Sigmoid colon (tissue), 7 donors: ENCODE measurements at regions of chr17 and their contacts with region 1.

Region 1: GRCh38 chr17:78497115-78497540 is 80.1 kb downstream of the DNAH17 start:
- DNase-seq: peak; percentile 87
- H3K4me3 ChIP-seq: no peak overlapping the region
- H3K27ac ChIP-seq: no peak overlapping the region
- H3K4me1 ChIP-seq: no peaks in the 10 kb centered on the region
- H3K27me3 ChIP-seq: no peaks in the 10 kb centered on the region
- CTCF ChIP-seq: peak; percentile 67 to 73 (median 68)
- EP300 ChIP-seq: no peak
- POLR2A ChIP-seq: no peak

Region 2: DNA sequence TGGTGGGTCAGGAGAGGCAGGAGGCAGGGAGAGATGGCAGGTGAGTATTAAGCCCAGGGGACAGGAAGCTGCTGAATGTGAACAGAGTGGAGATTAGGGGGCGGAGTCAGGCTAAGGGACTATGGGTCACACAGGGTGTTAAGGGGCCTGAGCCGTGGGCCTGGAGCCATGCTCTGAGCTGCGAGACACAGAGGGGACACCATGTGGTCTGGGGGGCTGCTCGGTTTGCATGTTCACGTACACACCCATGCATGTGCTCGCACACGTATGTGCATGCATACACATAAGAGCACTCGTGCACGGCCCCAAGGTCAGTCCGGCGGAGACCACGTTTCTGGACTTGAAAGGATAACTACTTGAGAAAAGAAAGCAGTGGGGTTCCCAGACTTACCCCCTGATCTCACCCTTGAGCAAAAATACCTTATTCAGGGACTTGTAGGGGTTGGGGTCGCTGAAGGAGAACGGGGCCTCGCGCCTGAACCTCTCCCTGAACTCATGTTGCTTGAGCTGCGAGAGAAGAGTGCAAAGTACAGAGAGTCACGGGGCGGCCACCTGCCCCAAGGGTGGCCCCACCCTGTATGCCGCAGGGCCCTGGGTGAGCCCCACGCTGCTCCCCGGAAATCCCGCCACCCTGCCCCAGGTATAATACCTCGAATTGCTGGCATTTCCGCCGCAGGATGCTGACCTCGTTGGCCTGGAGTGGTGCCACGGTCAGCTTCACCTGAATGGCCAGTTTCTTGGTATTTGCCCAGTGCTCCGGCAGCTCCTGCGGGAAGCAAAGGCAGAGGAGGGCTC is 29.3 kb after region 1 on chr17:
- intact Hi-C with region 1: no loop called
- DNase-seq: no peak
- H3K4me3 ChIP-seq: no peak overlapping the region
- H3K27ac ChIP-seq: no peak overlapping the region
- H3K4me1 ChIP-seq: no peaks in the 10 kb centered on the region
- H3K27me3 ChIP-seq: no peaks in the 10 kb centered on the region
- CTCF ChIP-seq: no peak
- EP300 ChIP-seq: no peak
- POLR2A ChIP-seq: no peak

Region 3: GRCh38 chr17:78708510-78708973 is 211.4 kb after region 1 on chr17:
- intact Hi-C with region 1: loop called (anchors 1 kb)
- DNase-seq: peak; percentile 86
- H3K4me3 ChIP-seq: no peak overlapping the region
- H3K27ac ChIP-seq: no peak overlapping the region
- H3K4me1 ChIP-seq: peaks cover 0 to 30% (median 10%) of the 10 kb centered on the region in 4 donors
- H3K27me3 ChIP-seq: no peaks in the 10 kb centered on the region
- CTCF ChIP-seq: peak; percentile 77 to 86 (median 78)
- EP300 ChIP-seq: no peak
- POLR2A ChIP-seq: no peak

Region 4: GRCh38 chr17:78745407-78746088 is 248.4 kb after region 1 on chr17:
- intact Hi-C with region 1: loop called (anchors 1 kb)
- DNase-seq: no peak
- H3K4me3 ChIP-seq: no peak overlapping the region
- H3K27ac ChIP-seq: peak overlapping the region in 1 of 4 donors; percentile 23
- H3K4me1 ChIP-seq: peaks cover 0 to 41% (median 34%) of the 10 kb centered on the region in 4 donors
- H3K27me3 ChIP-seq: no peaks in the 10 kb centered on the region
- CTCF ChIP-seq: peak; percentile 29 to 66 (median 40)
- EP300 ChIP-seq: no peak
- POLR2A ChIP-seq: no peak